ENCODE measurements at regions of chr14 and their contacts with region 1.

Region 1: DNA sequence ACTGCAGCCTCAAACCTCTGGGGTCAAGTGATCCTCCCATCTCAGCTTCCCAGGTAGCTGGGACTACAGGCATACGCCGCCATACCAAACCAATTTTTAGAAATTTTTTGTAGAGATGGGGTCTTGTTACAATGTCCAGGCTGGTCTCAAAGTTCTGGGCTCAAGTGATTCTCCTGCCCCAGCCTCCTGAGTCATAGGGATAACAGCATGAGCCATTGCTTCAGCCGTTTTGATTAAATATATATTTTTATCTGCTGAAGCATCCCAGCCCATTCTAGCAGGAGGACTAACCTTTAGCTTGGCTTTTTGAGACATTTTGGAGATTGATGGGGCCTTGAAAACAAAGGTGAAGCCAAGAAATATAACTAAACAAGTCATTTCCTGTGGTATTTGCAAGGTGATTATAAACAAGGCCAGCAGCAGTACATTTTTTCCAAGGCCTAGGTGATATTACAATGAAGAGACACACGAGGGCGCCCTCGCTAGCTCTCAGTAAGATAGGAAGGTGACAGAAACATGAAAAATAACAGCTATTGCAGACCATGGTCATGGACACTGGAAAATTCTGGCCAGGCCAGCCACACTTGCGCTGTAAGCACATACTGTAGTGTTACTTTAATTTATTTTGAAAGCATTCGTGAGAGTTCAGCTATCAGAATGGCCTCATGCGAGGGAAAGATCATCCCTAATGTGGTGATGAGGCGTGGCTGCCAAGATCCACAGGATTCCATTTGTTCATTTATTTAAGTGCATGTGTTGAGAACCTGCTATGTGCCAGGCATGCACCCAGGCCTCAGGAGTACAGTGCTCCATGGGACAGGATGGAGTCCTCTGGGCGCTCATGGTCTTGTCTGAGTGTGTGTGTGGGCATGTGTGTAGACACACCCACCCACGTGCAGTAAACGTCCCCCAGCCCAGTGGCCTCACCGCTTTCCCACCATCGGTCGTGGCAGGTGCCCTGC is 63.5 kb downstream of the DGLUCY start:
- DNase-seq: no peak
- H3K4me3 ChIP-seq: no peak overlapping the region
- H3K27ac ChIP-seq: no peak overlapping the region
- H3K4me1 ChIP-seq: peaks cover 0 to 17% (median 3%) of the 10 kb centered on the region in 4 donors
- H3K27me3 ChIP-seq: no peaks in the 10 kb centered on the region
- CTCF ChIP-seq: peak; percentile 41 to 74 (median 65)
- EP300 ChIP-seq: no peak
- POLR2A ChIP-seq: no peak

Region 2: GRCh38 chr14:90288651-90289355 is 888.6 kb before region 1 on chr14:
- intact Hi-C with region 1: no loop called
- DNase-seq: no peak
- H3K4me3 ChIP-seq: no peak overlapping the region
- H3K27ac ChIP-seq: no peak overlapping the region
- H3K4me1 ChIP-seq: no peaks in the 10 kb centered on the region
- H3K27me3 ChIP-seq: no peaks in the 10 kb centered on the region
- CTCF ChIP-seq: no peak
- EP300 ChIP-seq: no peak
- POLR2A ChIP-seq: no peak

Region 3: GRCh38 chr14:91286530-91286937 is 109.2 kb after region 1 on chr14:
- intact Hi-C with region 1: loop called (anchors 1 kb)
- DNase-seq: peak; percentile 83
- H3K4me3 ChIP-seq: no peak overlapping the region
- H3K27ac ChIP-seq: no peak overlapping the region
- H3K4me1 ChIP-seq: peaks cover 0 to 31% (median 26%) of the 10 kb centered on the region in 4 donors
- H3K27me3 ChIP-seq: no peaks in the 10 kb centered on the region
- CTCF ChIP-seq: peak; percentile 81 to 95 (median 90)
- EP300 ChIP-seq: no peak
- POLR2A ChIP-seq: no peak

Measured in sigmoid colon (tissue), 7 donors.